ENCODE measurements at regions of chr12 and their contacts with region 1.

Region 1: GRCh38 chr12:51923501-51924271 is 16.4 kb downstream of the ACVRL1 start:
- DNase-seq: peak; percentile 12 to 66 (median 42)
- ATAC-seq: peak; percentile 83
- H3K4me3 ChIP-seq: no peak overlapping the region
- H3K4me3 Mint-ChIP-seq: peak overlapping the region in 5 of 10 donors; percentile 21 to 53 (median 44)
- H3K27ac ChIP-seq: no peak overlapping the region
- H3K27ac Mint-ChIP-seq: peak overlapping the region in 1 of 9 donors; percentile 42
- H3K4me1 ChIP-seq: no peaks in the 10 kb centered on the region
- H3K4me1 Mint-ChIP-seq: peaks cover 5 to 12% (median 9%) of the 10 kb centered on the region in 7 donors
- H3K27me3 ChIP-seq: peaks cover 0 to 3% of the 10 kb centered on the region in 2 donors
- H3K27me3 Mint-ChIP-seq: peaks cover 0 to 13% (median 0%) of the 10 kb centered on the region in 5 donors

Region 2: DNA sequence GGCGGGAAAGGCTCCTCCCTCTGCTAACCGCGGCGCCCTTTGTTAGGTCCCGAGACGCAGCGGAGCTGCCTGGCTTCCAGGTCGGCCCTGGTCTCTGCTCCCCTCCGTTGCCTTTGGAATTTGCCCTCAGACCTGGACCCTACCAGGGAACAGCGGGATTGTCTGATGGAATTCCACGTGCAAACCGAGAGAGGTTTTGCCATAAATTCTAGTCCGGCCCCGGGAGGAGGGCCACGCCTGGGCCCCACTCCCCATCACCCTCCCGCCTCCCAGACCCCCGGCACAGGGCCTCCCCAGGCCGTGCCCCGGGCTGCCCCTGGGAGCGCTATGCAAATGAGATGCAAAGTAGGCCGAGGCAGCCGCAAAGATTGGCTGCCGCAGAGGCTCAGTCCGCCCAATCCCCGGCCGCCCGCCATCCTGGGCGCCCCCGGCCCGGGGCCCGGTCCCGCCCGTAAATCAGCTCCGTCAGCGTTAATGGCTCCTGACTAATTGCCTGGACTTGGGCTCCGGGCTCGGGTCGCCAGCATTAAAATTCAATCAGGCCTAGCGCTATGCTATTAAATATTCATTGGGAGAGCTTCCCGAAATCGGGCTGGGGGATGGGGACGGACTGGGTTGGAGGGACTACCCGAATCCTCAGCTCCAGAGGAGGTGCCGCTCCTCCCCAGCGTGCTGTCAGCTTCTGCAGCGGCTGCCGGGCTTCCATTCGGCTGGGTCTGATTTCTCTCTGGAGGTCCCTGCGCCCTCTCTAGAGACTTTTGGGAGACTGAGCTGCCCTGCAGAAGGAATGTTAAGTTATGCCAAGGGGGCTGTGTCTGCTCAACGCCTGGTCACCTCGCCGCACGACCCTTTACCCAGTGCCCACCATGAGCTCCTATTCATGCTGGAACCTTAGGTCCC is 59.5 kb before region 1 on chr12:
- CTCF ChIA-PET with region 1: no interaction called
- POLR2A ChIA-PET with region 1: no interaction called
- intact Hi-C with region 1: no loop called
- DNase-seq: peak in 2 of 9 donors; percentile 13 to 25
- ATAC-seq: peak; percentile 78
- H3K4me3 ChIP-seq: peak overlapping the region; percentile 39
- H3K4me3 Mint-ChIP-seq: peak overlapping the region in 9 of 10 donors; percentile 41 to 75 (median 56)
- H3K27ac ChIP-seq: no peak overlapping the region
- H3K27ac Mint-ChIP-seq: no peak overlapping the region
- H3K4me1 ChIP-seq: no peaks in the 10 kb centered on the region
- H3K4me1 Mint-ChIP-seq: peaks cover 2 to 20% (median 12%) of the 10 kb centered on the region in 7 donors
- H3K27me3 ChIP-seq: peaks cover 4 to 32% of the 10 kb centered on the region in 2 donors
- H3K27me3 Mint-ChIP-seq: peaks cover 44 to 63% (median 60%) of the 10 kb centered on the region in 5 donors

Region 3: DNA sequence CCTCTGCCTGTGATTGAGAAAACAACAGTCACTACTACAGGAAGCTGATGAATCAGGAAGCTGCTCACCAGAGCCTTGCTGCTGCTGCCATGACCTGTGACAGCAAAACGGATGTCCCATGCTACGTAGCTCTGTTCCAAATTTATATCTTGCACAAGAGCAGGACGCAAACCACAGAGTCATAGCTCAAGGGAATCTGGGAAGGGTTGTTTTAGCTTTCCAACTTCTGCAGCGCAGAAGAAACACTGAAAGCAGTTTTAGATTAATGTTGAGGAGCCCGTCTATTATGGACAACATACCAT is 37.7 kb before region 1 on chr12:
- CTCF ChIA-PET with region 1: interaction called, 12 read pairs
- POLR2A ChIA-PET with region 1: no interaction called
- intact Hi-C with region 1: no loop called
- DNase-seq: peak in 8 of 9 donors; percentile 27 to 71 (median 64)
- ATAC-seq: peak; percentile 95
- H3K4me3 ChIP-seq: peak overlapping the region; percentile 25
- H3K4me3 Mint-ChIP-seq: peak overlapping the region; percentile 8 to 77 (median 62)
- H3K27ac ChIP-seq: peak overlapping the region; percentile 1
- H3K27ac Mint-ChIP-seq: peak overlapping the region; percentile 86 to 97 (median 95)
- H3K4me1 ChIP-seq: peaks cover 0 to 5% of the 10 kb centered on the region in 2 donors
- H3K4me1 Mint-ChIP-seq: peaks cover 12 to 22% (median 16%) of the 10 kb centered on the region in 7 donors
- H3K27me3 ChIP-seq: no peaks in the 10 kb centered on the region
- H3K27me3 Mint-ChIP-seq: peaks cover 0 to 2% (median 0%) of the 10 kb centered on the region in 5 donors

Region 4: DNA sequence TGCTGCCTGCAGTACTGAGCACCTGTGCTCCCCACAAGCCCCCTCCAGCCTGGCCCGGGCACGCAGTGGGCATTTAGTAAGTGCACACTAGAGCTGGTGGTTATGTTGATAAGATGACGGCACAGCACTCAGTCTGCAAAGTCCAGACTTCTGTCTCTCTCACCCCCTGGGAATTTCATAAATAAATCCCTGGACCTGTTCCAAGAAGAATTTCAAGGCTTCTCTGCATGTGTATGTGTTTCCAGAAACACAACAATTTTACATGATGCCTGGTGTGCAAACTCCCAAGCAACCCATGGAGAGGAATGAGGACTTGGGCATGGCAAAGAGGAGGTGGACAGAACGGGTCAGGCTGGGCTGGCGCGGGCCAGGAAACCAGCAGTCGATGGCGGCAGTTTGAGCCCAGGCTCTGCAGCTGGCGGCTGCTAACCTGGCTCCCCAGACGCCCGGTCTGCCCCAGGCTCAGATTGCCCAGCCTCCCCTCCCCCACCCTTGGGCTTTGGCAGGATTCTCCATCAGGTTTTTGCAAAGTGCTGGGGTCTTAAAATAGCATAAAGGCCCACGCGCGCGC is 17.4 kb after region 1 on chr12:
- CTCF ChIA-PET with region 1: no interaction called
- POLR2A ChIA-PET with region 1: no interaction called
- intact Hi-C with region 1: no loop called
- DNase-seq: no peak
- ATAC-seq: no peak
- H3K4me3 ChIP-seq: no peak overlapping the region
- H3K4me3 Mint-ChIP-seq: no peak overlapping the region
- H3K27ac ChIP-seq: no peak overlapping the region
- H3K27ac Mint-ChIP-seq: no peak overlapping the region
- H3K4me1 ChIP-seq: no peaks in the 10 kb centered on the region
- H3K4me1 Mint-ChIP-seq: peaks cover 4 to 13% (median 6%) of the 10 kb centered on the region in 7 donors
- H3K27me3 ChIP-seq: peaks cover 0 to 4% of the 10 kb centered on the region in 2 donors
- H3K27me3 Mint-ChIP-seq: peaks cover 0 to 32% (median 4%) of the 10 kb centered on the region in 5 donors

Region 5: GRCh38 chr12:51980051-51980808 is 56.5 kb after region 1 on chr12:
- CTCF ChIA-PET with region 1: interaction called, 35 read pairs
- POLR2A ChIA-PET with region 1: no interaction called
- intact Hi-C with region 1: loop called (anchors 1 kb)
- DNase-seq: peak; percentile 39 to 76 (median 65)
- ATAC-seq: peak; percentile 99
- H3K4me3 ChIP-seq: no peak overlapping the region
- H3K4me3 Mint-ChIP-seq: peak overlapping the region in 3 of 10 donors; percentile 7 to 45 (median 32)
- H3K27ac ChIP-seq: no peak overlapping the region
- H3K27ac Mint-ChIP-seq: peak overlapping the region in 5 of 9 donors; percentile 25 to 74 (median 48)
- H3K4me1 ChIP-seq: peaks cover 5 to 10% of the 10 kb centered on the region in 2 donors
- H3K4me1 Mint-ChIP-seq: peaks cover 24 to 32% (median 28%) of the 10 kb centered on the region in 7 donors
- H3K27me3 ChIP-seq: no peaks in the 10 kb centered on the region
- H3K27me3 Mint-ChIP-seq: peaks cover 0 to 5% (median 0%) of the 10 kb centered on the region in 5 donors